Activated T-helper 2 cell treated with anti-CD3 and anti-CD28 coated beads, Interferon-gamma antibody, Interleukin-2, Interleukin-4, amounts not matched to agents 10 μg/mL and 5 μg/mL and 100 μg/mL, durations not matched to agents 14 hours and 24 hours and 36 hours (primary cell): ENCODE measurements at regions of chr11 and their contacts with region 1.

Region 1: GRCh38 chr11:35013514-35014233 is 97.3 kb downstream of the PDHX start:
- DNase-seq: peak; percentile 24
- H3K4me3 Mint-ChIP-seq: no peak overlapping the region
- H3K27ac Mint-ChIP-seq: peak overlapping the region; percentile 72
- H3K4me1 Mint-ChIP-seq: peaks cover 54% of the 10 kb centered on the region
- H3K27me3 Mint-ChIP-seq: peaks cover 20% of the 10 kb centered on the region

Region 2: DNA sequence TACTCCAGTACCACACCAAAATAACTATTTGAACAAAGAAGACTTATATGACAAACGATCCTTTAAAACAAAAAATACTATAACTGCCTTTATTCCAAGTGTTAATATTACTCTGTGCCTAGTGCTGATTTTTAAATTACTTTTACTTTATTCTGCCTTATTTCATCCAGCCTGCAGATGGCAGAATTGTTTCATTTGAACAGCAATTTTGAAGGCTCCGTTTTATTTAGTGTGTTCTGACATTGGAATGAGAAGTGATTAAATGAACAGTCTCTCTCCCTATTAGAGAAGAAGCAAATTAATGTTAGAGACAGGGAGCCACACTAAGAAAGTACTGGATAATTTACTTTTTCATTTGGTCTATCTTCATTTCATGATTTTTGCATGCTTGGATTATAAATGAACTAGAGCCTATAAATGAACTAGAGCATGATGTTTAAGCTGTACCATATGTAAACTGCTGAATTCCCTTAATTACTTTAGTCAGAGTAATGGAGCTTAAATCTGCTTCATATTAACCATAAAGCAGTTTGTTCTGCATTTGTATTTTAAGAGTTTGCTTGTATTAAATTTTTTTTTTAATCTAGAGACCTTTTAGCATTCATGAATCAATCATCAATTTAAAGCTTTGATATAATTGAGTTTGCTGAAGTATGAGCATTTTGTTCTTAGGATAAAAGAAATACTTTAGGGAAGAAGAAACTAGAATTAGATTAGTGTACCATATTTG is 87.4 kb before region 1 on chr11:
- intact Hi-C with region 1: loop called (anchors 2 kb)
- DNase-seq: no peak
- H3K4me3 Mint-ChIP-seq: no peak overlapping the region
- H3K27ac Mint-ChIP-seq: no peak overlapping the region
- H3K4me1 Mint-ChIP-seq: peaks cover 15% of the 10 kb centered on the region
- H3K27me3 Mint-ChIP-seq: no peaks in the 10 kb centered on the region

Region 3: DNA sequence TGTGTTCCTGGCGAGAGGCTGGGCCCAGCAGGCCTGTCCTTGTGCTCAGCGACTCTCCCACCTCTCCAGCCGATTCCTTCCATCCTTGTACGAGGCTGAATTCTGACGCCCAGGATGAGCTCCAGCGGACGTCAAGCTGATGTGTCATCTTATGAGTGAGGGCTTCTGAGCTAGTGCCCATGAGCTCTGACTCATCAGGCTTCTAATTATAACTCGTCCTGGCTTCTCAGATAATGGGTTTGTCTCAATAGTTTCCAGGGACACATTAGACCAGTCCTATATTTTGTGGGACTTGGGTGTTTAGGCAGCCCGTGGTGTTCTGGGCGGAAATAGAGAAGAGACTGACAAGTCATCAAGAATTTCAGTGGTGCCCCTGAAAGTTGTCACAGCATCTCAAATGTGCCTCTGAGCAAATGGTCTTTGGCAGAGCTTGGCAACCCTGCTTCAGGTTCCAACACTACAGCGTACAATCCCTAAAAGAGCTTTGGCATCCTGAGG is 17.1 kb after region 1 on chr11:
- intact Hi-C with region 1: loop called (anchors 1 kb)
- DNase-seq: no peak
- H3K4me3 Mint-ChIP-seq: peak overlapping the region; percentile 51
- H3K27ac Mint-ChIP-seq: peak overlapping the region; percentile 88
- H3K4me1 Mint-ChIP-seq: peaks cover 44% of the 10 kb centered on the region
- H3K27me3 Mint-ChIP-seq: peaks cover 17% of the 10 kb centered on the region

Region 4: GRCh38 chr11:35040221-35040942 is 26.7 kb after region 1 on chr11:
- intact Hi-C with region 1: loop called (anchors 1 kb)
- DNase-seq: peak; percentile 69
- H3K4me3 Mint-ChIP-seq: peak overlapping the region; percentile 73
- H3K27ac Mint-ChIP-seq: peak overlapping the region; percentile 91
- H3K4me1 Mint-ChIP-seq: peaks cover 58% of the 10 kb centered on the region
- H3K27me3 Mint-ChIP-seq: peaks cover 20% of the 10 kb centered on the region

Region 5: GRCh38 chr11:35066783-35067423 is 53.2 kb after region 1 on chr11:
- intact Hi-C with region 1: loop called (anchors 2 kb)
- DNase-seq: no peak
- H3K4me3 Mint-ChIP-seq: no peak overlapping the region
- H3K27ac Mint-ChIP-seq: peak overlapping the region; percentile 24
- H3K4me1 Mint-ChIP-seq: peaks cover 22% of the 10 kb centered on the region
- H3K27me3 Mint-ChIP-seq: peaks cover 10% of the 10 kb centered on the region

Region 6: GRCh38 chr11:35126000-35126878 is 112.6 kb after region 1 on chr11:
- intact Hi-C with region 1: loop called (anchors 1 kb)
- DNase-seq: no peak
- H3K4me3 Mint-ChIP-seq: peak overlapping the region; percentile 57
- H3K27ac Mint-ChIP-seq: peak overlapping the region; percentile 79
- H3K4me1 Mint-ChIP-seq: peaks cover 56% of the 10 kb centered on the region
- H3K27me3 Mint-ChIP-seq: peaks cover 7% of the 10 kb centered on the region

Region 7: GRCh38 chr11:35173011-35173511 is 159.4 kb after region 1 on chr11:
- intact Hi-C with region 1: loop called (anchors 2 kb)
- DNase-seq: no peak
- H3K4me3 Mint-ChIP-seq: no peak overlapping the region
- H3K27ac Mint-ChIP-seq: peak overlapping the region; percentile 75
- H3K4me1 Mint-ChIP-seq: peaks cover 91% of the 10 kb centered on the region
- H3K27me3 Mint-ChIP-seq: no peaks in the 10 kb centered on the region